CD8-positive, alpha-beta memory T cell (primary cell): ENCODE measurements at regions of chr7 and their contacts with region 1.

Region 1: DNA sequence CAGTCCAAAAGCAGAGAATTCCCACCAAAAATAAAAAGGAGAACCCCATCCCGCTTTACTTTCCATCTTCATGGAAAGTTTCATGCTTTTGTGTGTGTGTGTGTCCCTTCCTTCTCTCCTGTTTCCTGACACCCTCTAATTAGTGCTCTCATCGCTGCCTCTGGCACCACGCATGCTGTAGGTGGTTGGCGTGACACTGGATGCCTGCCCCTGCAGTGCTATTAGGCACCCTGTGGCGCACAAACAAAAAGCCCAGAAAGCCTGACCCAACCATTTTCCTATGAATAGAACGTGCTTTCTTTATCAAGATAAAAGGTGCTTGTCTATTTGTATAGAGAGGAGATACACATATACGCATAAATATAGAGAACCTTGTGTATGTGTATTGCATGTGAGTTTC is 120.8 kb upstream of the CDCA7L start:
- DNase-seq: no peak
- H3K4me3 ChIP-seq: no peak overlapping the region
- H3K4me3 Mint-ChIP-seq: no peak overlapping the region
- H3K27ac ChIP-seq: no peak overlapping the region
- H3K27ac Mint-ChIP-seq: no peak overlapping the region
- H3K4me1 ChIP-seq: no peaks in the 10 kb centered on the region
- H3K4me1 Mint-ChIP-seq: no peaks in the 10 kb centered on the region
- H3K27me3 ChIP-seq: no peaks in the 10 kb centered on the region
- H3K27me3 Mint-ChIP-seq: peaks cover 10 to 25% of the 10 kb centered on the region in 2 donors

Region 2: DNA sequence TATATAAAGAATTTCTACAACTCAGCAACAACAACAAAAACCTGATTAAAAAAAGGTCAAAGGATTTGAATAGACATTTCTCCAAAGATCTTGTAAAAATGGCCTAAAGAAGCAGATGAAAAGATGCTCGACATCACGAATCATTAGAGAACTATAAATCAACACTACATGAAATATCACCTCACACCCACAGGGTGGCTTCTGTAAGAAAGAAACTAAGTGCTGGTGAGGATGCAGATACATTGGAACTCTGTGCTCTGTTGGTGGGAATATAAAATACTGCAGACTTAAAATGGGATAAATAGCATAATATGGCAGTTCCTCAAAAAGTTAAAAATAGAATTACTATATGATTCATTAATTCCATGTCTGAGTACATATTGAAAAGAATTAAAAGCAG is 82.4 kb before region 1 on chr7:
- CTCF ChIA-PET with region 1: no interaction called
- POLR2A ChIA-PET with region 1: no interaction called
- DNase-seq: no peak
- H3K4me3 ChIP-seq: no peak overlapping the region
- H3K4me3 Mint-ChIP-seq: no peak overlapping the region
- H3K27ac ChIP-seq: no peak overlapping the region
- H3K27ac Mint-ChIP-seq: no peak overlapping the region
- H3K4me1 ChIP-seq: no peaks in the 10 kb centered on the region
- H3K4me1 Mint-ChIP-seq: no peaks in the 10 kb centered on the region
- H3K27me3 ChIP-seq: no peaks in the 10 kb centered on the region
- H3K27me3 Mint-ChIP-seq: peaks cover 4% of the 10 kb centered on the region in 2 donors

Region 3: DNA sequence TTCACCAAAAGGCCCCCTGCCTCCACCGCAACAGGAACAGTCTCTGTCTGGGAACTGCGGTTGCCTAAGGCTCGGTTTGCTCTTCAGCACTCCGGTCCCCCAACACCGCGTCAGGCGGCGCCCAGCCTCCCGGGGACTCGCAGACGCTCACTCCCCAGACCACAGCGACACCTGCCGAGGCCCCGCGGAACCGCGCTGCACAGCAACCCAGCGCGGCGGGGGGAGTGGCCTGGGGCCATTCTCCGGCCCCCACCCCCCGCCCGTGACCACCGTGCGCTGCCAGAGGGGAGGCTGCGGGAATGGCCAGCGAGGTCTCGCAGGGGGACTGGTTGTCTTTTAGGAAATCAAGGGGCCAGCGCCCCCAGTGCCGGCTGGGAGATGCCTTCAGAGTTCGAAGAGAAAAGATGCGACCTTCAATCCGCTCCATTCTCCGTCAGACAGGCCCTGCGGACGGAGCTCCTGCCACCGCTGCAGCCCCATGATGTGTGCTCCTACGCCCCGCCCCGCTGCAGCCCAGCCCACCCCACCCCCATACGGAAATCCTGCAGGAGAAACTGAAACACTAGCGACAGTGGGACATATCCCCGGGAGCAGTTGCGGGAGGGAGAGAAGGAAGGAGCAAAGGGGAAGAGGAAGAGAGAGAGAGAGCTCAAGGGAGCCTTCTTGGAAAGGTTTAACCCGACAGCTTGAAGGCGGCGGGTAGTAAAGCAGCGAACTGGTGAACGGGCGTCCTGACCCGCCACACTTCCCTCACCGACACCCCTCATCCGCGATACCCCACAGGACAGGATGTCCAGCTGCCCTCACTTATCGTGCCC is 16.6 kb after region 1 on chr7:
- CTCF ChIA-PET with region 1: interaction called, 10 read pairs
- POLR2A ChIA-PET with region 1: no interaction called
- DNase-seq: peak; percentile 76 to 81 (median 77)
- H3K4me3 ChIP-seq: peak overlapping the region; percentile 68
- H3K4me3 Mint-ChIP-seq: peak overlapping the region; percentile 81 to 95 (median 84)
- H3K27ac ChIP-seq: no peak overlapping the region
- H3K27ac Mint-ChIP-seq: peak overlapping the region in 7 of 8 donors; percentile 40 to 95 (median 85)
- H3K4me1 ChIP-seq: peaks cover 6% of the 10 kb centered on the region
- H3K4me1 Mint-ChIP-seq: peaks cover 11 to 17% (median 13%) of the 10 kb centered on the region in 3 donors
- H3K27me3 ChIP-seq: no peaks in the 10 kb centered on the region
- H3K27me3 Mint-ChIP-seq: peaks cover 13 to 46% of the 10 kb centered on the region in 2 donors

Region 4: GRCh38 chr7:22269963-22270362 is 203.5 kb after region 1 on chr7:
- CTCF ChIA-PET with region 1: no interaction called
- POLR2A ChIA-PET with region 1: no interaction called
- DNase-seq: no peak
- H3K4me3 ChIP-seq: no peak overlapping the region
- H3K4me3 Mint-ChIP-seq: no peak overlapping the region
- H3K27ac ChIP-seq: no peak overlapping the region
- H3K27ac Mint-ChIP-seq: no peak overlapping the region
- H3K4me1 ChIP-seq: no peaks in the 10 kb centered on the region
- H3K4me1 Mint-ChIP-seq: peaks cover 0 to 5% (median 0%) of the 10 kb centered on the region in 3 donors
- H3K27me3 ChIP-seq: no peaks in the 10 kb centered on the region
- H3K27me3 Mint-ChIP-seq: no peaks in the 10 kb centered on the region